B cell (primary cell): ENCODE measurements at regions of chr11 and their contacts with region 1.

Region 1: GRCh38 chr11:34051349-34052035 is at the start of gene CAPRIN1:
- DNase-seq: peak; percentile 94
- ATAC-seq: peak; percentile 67
- H3K4me3 ChIP-seq: peak within 1 kb of the TSS; percentile 90 to 98 (median 95)
- H3K4me3 Mint-ChIP-seq: peak within 1 kb of the TSS; percentile 97
- H3K27ac ChIP-seq: peak within 1 kb of the TSS; percentile 99 to 100
- H3K27ac Mint-ChIP-seq: peak within 1 kb of the TSS; percentile 96
- H3K4me1 ChIP-seq: peaks cover 27 to 30% of the 10 kb centered on the region in 2 donors
- H3K4me1 Mint-ChIP-seq: peaks cover 28% of the 10 kb centered on the region
- H3K27me3 ChIP-seq: no peaks in the 10 kb centered on the region
- H3K27me3 Mint-ChIP-seq: no peaks in the 10 kb centered on the region
- CTCF ChIP-seq: no peak
- total RNA-seq, gene CAPRIN1: 132 and 133 TPM in 2 replicates

Region 2: DNA sequence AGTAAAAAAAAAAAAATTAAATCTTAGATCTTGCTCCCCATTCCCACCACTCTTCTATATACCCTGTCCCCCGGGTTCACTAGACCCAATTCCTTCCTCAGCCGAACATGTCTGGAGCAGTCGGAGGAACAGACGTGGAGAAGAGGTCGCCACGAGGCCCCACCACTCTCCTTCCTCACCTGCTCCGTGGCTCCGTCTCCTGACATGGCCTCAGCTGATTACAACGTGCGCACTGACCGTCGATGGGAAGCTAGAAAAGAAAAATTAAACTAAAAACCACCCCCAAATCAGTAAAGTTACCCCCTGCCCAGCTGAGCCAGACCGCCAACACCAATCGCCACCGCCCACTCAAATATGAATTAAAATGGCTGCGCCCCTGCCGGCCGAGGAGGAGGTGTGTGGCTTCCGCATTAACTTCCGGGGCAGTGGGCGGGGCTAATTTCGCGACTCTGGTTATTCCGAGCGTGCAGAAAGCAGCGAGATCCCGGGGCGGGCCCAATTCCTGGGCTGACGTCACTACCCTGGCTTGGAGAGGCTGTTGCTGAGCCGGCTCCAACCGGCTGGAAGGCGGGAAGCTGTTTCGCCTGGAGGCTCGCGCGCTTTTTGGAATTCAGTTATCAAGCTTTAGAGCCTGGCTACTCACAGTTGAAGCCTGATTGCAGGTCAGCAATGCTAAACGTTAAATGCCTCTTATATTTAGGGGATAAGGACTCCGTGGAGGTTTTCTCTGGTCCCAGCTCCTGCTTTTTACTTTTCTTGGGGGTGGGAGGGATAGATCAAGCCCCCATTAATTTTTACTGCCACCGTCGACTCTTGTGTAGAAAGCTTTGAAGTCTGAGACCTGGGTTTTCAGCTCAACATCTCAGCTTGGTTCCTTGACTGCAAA is 890.1 kb before region 1 on chr11 and contains the start of gene CSTF3:
- CTCF ChIA-PET with region 1: no interaction called
- POLR2A ChIA-PET with region 1: no interaction called
- intact Hi-C with region 1: loop called (anchors 5 kb)
- DNase-seq: peak; percentile 92
- ATAC-seq: peak; percentile 98
- H3K4me3 ChIP-seq: peak within 1 kb of the TSS; percentile 77 to 99 (median 78)
- H3K4me3 Mint-ChIP-seq: peak within 1 kb of the TSS; percentile 99
- H3K27ac ChIP-seq: peak within 1 kb of the TSS; percentile 84 to 88
- H3K27ac Mint-ChIP-seq: peak within 1 kb of the TSS; percentile 95
- H3K4me1 ChIP-seq: peaks cover 25 to 32% of the 10 kb centered on the region in 2 donors
- H3K4me1 Mint-ChIP-seq: peaks cover 49% of the 10 kb centered on the region
- H3K27me3 ChIP-seq: no peaks in the 10 kb centered on the region
- H3K27me3 Mint-ChIP-seq: no peaks in the 10 kb centered on the region
- CTCF ChIP-seq: no peak
- total RNA-seq, gene CSTF3: 38.8 and 42.2 TPM in 2 replicates

Region 3: GRCh38 chr11:33773987-33774735 is 277.3 kb before region 1 on chr11 and contains the start of gene FBXO3:
- CTCF ChIA-PET with region 1: no interaction called
- POLR2A ChIA-PET with region 1: interaction called, 3 read pairs
- intact Hi-C with region 1: loop called (anchors 2 kb)
- DNase-seq: peak; percentile 90
- ATAC-seq: peak; percentile 94
- H3K4me3 ChIP-seq: peak within 1 kb of the TSS; percentile 66 to 91 (median 86)
- H3K4me3 Mint-ChIP-seq: peak within 1 kb of the TSS; percentile 92
- H3K27ac ChIP-seq: peak within 1 kb of the TSS; percentile 57 to 82
- H3K27ac Mint-ChIP-seq: peak within 1 kb of the TSS; percentile 95
- H3K4me1 ChIP-seq: peaks cover 21 to 24% of the 10 kb centered on the region in 2 donors
- H3K4me1 Mint-ChIP-seq: peaks cover 40% of the 10 kb centered on the region
- H3K27me3 ChIP-seq: peaks cover 0 to 22% (median 9%) of the 10 kb centered on the region in 4 experiments
- H3K27me3 Mint-ChIP-seq: peaks cover 19% of the 10 kb centered on the region
- CTCF ChIP-seq: no peak
- total RNA-seq, gene FBXO3: 32.7 and 34.3 TPM in 2 replicates

Region 4: GRCh38 chr11:33996498-33997454 is 54.7 kb before region 1 on chr11:
- CTCF ChIA-PET with region 1: interaction called, 8 read pairs
- POLR2A ChIA-PET with region 1: interaction called, 3 read pairs
- intact Hi-C with region 1: loop called (anchors 2 kb)
- DNase-seq: peak; percentile 85
- ATAC-seq: peak; percentile 98
- H3K4me3 ChIP-seq: no peak overlapping the region
- H3K4me3 Mint-ChIP-seq: peak overlapping the region; percentile 6
- H3K27ac ChIP-seq: no peak overlapping the region
- H3K27ac Mint-ChIP-seq: no peak overlapping the region
- H3K4me1 ChIP-seq: peaks cover 8 to 13% of the 10 kb centered on the region in 2 donors
- H3K4me1 Mint-ChIP-seq: peaks cover 13% of the 10 kb centered on the region
- H3K27me3 ChIP-seq: peaks cover 0 to 27% (median 13%) of the 10 kb centered on the region in 4 experiments
- H3K27me3 Mint-ChIP-seq: peaks cover 23% of the 10 kb centered on the region
- CTCF ChIP-seq: peak; percentile 85

Region 5: DNA sequence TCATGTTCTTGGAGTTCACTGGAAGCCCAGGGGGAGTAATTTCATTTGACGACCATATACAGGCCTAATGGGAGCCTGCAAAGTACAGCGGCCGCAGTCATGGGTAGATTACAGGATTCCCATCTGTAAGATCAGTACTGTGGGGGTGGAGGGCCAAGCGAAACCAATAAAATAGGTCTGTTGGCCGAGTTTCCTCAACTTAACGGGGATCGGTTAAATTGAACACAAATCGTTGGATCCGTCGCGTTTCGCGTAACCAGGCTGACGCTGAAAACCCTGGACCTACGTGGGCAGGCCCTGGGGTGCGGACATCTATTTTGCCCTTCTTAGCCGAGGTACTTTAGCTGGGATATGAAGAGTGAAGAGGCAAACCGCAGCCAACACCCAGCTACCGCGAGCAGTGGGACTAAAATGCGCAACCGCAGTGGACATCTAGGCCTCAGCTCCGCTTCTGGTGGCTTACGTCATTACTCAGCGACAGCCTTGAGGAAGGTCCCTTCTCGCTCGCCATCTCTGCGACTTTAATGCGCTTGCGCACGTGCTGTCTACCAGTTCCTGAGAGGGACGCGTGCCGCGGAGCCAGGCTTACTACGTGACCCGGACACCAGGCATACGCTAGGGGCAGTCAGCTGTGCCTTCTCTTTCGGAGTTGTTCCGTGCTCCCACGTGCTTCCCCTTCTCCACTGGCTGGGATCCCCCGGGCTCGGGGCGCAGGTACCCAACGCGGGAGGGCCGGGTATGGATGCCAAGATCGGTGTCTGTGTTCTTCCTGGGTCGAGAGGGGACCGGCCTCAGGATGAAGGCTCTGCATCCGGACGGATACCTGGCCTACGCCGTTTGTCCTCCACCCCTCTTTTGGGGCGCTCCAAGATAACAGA is 53.8 kb after region 1 on chr11 and contains the start of gene NAT10:
- CTCF ChIA-PET with region 1: interaction called, 12 read pairs
- POLR2A ChIA-PET with region 1: interaction called, 26 read pairs
- intact Hi-C with region 1: loop called (anchors 1 kb)
- DNase-seq: peak; percentile 99
- ATAC-seq: peak; percentile 91
- H3K4me3 ChIP-seq: peak within 1 kb of the TSS; percentile 70 to 99 (median 93)
- H3K4me3 Mint-ChIP-seq: peak within 1 kb of the TSS; percentile 97
- H3K27ac ChIP-seq: peak within 1 kb of the TSS; percentile 95 to 96
- H3K27ac Mint-ChIP-seq: peak within 1 kb of the TSS; percentile 100
- H3K4me1 ChIP-seq: peaks cover 24 to 28% of the 10 kb centered on the region in 2 donors
- H3K4me1 Mint-ChIP-seq: peaks cover 47% of the 10 kb centered on the region
- H3K27me3 ChIP-seq: no peaks in the 10 kb centered on the region
- H3K27me3 Mint-ChIP-seq: no peaks in the 10 kb centered on the region
- CTCF ChIP-seq: no peak
- total RNA-seq, gene NAT10: 73.5 and 74.5 TPM in 2 replicates

Region 6: DNA sequence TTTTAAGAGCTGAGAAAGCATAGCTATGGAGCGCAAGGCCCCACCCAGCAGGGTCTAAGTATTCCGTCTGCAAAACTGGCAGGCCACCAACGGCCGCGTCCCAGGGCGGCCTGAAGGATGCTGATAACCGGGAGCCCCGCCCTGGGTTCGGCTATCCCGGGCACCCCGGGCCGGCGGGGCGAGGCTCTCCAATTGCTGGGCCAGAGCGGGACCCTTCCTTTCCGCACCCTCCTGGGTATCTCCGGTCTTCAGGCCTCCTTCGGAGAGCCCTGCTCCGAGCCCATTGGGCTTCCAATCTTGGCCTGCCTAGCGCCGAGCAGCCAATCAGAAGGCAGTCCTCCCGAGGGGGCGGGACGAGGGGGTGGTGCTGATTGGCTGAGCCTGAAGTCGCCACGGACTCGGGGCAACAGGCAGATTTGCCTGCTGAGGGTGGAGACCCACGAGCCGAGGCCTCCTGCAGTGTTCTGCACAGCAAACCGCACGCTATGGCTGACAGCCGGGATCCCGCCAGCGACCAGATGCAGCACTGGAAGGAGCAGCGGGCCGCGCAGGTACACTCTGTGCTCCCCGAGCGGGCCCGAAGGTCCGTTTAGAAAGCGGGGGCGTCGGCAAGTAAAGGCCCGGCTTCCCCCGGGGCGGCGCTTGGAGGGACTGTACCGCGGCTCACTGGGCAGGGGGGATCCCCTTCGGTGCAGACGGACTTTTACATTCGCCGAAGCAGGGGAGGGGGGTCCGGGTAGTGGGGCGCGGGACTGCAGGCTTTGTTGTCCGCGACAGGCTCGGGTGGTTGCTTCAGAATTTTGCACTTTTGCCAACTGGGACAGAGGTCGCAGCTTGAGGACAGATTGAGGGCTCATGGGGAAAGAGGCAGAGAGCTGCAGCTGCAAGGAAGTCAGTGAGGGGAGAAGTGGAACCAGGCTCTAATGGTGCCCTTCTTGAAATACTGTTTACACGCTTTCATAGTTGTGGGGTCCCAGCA is 387.3 kb after region 1 on chr11 and contains the start of gene CAT:
- CTCF ChIA-PET with region 1: no interaction called
- POLR2A ChIA-PET with region 1: no interaction called
- intact Hi-C with region 1: loop called (anchors 1 kb)
- DNase-seq: peak; percentile 96
- ATAC-seq: peak; percentile 92
- H3K4me3 ChIP-seq: peak within 1 kb of the TSS; percentile 82 to 98 (median 88)
- H3K4me3 Mint-ChIP-seq: peak within 1 kb of the TSS; percentile 99
- H3K27ac ChIP-seq: peak within 1 kb of the TSS; percentile 75 to 85
- H3K27ac Mint-ChIP-seq: peak within 1 kb of the TSS; percentile 98
- H3K4me1 ChIP-seq: peaks cover 27 to 39% of the 10 kb centered on the region in 2 donors
- H3K4me1 Mint-ChIP-seq: peaks cover 44% of the 10 kb centered on the region
- H3K27me3 ChIP-seq: no peaks in the 10 kb centered on the region
- H3K27me3 Mint-ChIP-seq: no peaks in the 10 kb centered on the region
- CTCF ChIP-seq: no peak
- total RNA-seq, gene CAT: 83.2 and 88.8 TPM in 2 replicates

Region 7: DNA sequence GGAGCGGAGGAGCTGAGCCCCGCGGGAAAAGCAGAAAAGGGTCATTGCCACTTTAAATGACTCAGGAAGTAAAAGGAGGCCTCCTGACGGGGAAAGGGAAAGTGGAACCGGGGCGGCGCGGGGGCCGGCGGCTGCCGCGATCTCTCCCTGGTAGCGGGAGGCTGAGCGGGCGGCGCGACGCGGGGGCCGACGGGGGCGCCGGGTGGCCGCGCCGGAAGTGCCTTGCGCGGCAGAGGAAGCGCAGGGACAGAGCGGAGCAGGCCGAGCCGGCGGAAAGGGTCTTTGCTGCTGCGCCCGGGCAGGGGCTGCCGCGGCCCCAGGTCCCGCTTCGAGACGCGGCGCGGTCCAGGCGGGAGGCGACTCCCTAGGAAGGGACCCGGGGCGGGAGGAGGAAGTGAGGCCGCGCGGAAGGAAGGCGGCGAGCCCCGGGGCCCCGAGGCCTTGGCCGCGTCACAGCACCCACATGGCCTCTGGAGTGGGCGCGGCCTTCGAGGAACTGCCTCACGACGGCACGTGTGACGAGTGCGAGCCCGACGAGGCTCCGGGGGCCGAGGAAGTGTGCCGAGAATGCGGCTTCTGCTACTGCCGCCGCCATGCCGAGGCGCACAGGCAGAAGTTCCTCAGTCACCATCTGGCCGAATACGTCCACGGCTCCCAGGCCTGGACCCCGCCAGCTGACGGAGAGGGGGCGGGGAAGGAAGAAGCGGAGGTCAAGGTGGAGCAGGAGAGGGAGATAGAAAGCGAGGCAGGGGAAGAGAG is 1611.3 kb after region 1 on chr11 and contains the start of gene TRIM44:
- CTCF ChIA-PET with region 1: no interaction called
- POLR2A ChIA-PET with region 1: no interaction called
- intact Hi-C with region 1: loop called (anchors 10 kb)
- DNase-seq: peak; percentile 92
- ATAC-seq: peak; percentile 83
- H3K4me3 ChIP-seq: peak within 1 kb of the TSS; percentile 76 to 98 (median 89)
- H3K4me3 Mint-ChIP-seq: peak within 1 kb of the TSS; percentile 88
- H3K27ac ChIP-seq: peak within 1 kb of the TSS; percentile 86 to 96
- H3K27ac Mint-ChIP-seq: peak within 1 kb of the TSS; percentile 97
- H3K4me1 ChIP-seq: peaks cover 26 to 29% of the 10 kb centered on the region in 2 donors
- H3K4me1 Mint-ChIP-seq: peaks cover 40% of the 10 kb centered on the region
- H3K27me3 ChIP-seq: peaks cover 0 to 5% (median 0%) of the 10 kb centered on the region in 4 experiments
- H3K27me3 Mint-ChIP-seq: peaks cover 13% of the 10 kb centered on the region
- CTCF ChIP-seq: no peak
- total RNA-seq, gene TRIM44: 71.1 TPM in 2 replicates